ENCODE measurements at regions of chr5 and their contacts with region 1.

Region 1: DNA sequence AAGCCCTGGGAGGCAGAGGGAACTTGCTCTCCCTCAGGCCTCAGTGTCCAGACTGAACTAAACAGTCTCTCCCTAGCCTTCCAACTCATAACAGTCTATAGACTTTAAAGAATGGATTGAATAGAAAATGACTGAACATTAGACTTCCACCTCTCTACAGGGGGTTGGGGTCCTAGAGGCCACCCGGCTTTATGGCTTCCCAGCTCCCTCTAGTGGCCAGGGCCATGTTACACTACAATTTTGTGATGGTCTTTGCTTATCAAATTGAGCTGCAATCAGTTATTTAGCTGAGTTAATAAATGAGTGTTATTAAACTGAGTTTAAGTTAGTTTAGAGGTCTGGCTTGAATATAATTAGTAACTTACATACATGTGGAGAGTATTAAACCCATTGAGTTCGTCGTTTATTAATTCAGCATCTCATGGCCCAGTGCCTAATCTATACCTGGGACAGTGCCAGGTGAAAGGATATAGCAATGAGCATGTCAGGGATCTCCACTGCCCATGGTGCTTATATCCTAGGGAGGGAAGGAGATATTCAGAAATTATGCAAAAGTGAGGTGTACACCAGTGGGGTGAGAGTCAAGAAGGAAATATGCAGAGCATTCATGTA is 105.2 kb downstream of the SH3TC2 start:
- DNase-seq: peak; percentile 62
- ATAC-seq: peak; percentile 61
- H3K4me3 Mint-ChIP-seq: no peak overlapping the region
- H3K27ac Mint-ChIP-seq: no peak overlapping the region
- H3K4me1 Mint-ChIP-seq: no peaks in the 10 kb centered on the region
- H3K27me3 Mint-ChIP-seq: peaks cover 21% of the 10 kb centered on the region

Region 2: GRCh38 chr5:148820461-148821395 is 137.0 kb before region 1 on chr5:
- CTCF ChIA-PET with region 1: interaction called, 32 read pairs
- POLR2A ChIA-PET with region 1: no interaction called
- DNase-seq: peak; percentile 53
- ATAC-seq: peak; percentile 62
- H3K4me3 Mint-ChIP-seq: no peak overlapping the region
- H3K27ac Mint-ChIP-seq: no peak overlapping the region
- H3K4me1 Mint-ChIP-seq: peaks cover 14% of the 10 kb centered on the region
- H3K27me3 Mint-ChIP-seq: peaks cover 39% of the 10 kb centered on the region

Region 3: GRCh38 chr5:148831590-148832565 is 125.8 kb before region 1 on chr5:
- CTCF ChIA-PET with region 1: interaction called, 18 read pairs
- POLR2A ChIA-PET with region 1: no interaction called
- DNase-seq: no peak
- ATAC-seq: no peak
- H3K4me3 Mint-ChIP-seq: no peak overlapping the region
- H3K27ac Mint-ChIP-seq: no peak overlapping the region
- H3K4me1 Mint-ChIP-seq: peaks cover 62% of the 10 kb centered on the region
- H3K27me3 Mint-ChIP-seq: peaks cover 46% of the 10 kb centered on the region

Region 4: GRCh38 chr5:148976569-148977313 is 19.0 kb after region 1 on chr5:
- CTCF ChIA-PET with region 1: interaction called, 13 read pairs
- POLR2A ChIA-PET with region 1: interaction called, 3 read pairs
- DNase-seq: no peak
- ATAC-seq: no peak
- H3K4me3 Mint-ChIP-seq: no peak overlapping the region
- H3K27ac Mint-ChIP-seq: no peak overlapping the region
- H3K4me1 Mint-ChIP-seq: no peaks in the 10 kb centered on the region
- H3K27me3 Mint-ChIP-seq: peaks cover 19% of the 10 kb centered on the region

Measured in activated CD8-positive, alpha-beta T cell treated with anti-CD3 and anti-CD28 coated beads, Interleukin-2, amount 10 ng/mL, durations not matched to agents 7 days and 5 days (primary cell).